ENCODE measurements at regions of chr11 and their contacts with region 1.

Region 1: DNA sequence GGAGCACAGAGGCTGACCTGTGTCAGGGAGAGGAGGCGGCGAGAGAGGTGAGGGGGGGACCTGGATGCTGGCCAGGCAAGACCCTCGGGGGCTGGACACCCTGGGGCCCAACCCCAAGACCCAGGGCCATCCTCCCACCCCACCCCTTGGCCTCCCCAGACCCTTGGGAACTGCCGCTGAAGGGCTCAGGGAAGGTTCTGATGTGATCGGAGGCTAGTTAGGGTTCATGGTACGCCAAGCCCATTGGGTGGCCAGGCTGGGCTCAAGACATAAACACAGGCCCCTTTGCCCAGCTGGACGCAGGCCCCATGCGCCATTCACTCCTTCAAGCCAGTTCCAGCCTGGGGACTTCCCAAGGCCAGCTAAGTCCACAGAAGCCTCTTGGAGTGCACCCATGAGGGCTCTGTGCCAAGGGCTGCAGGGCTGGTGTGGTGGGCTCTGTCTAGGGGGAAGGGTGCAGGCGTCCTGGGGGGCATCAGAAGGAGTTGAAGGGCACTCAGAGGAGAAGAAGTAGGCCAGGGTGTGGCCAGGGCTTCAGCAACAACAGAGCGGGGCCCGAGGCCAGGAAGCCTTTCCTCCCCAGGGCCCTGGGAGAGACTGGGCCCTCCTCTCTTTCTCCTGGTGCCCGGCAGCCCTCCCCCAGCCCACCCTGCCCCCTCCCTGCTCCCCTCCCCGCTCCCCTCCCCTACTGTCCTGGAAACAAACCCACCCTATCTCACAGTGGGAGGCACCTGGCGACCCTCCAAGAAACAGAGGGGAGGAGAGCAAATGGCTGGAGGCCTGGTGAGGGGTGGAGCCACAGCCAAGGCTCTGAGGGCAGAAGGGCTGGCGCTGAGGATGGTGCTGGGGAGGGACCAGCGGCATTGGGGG is 12.9 kb downstream of the TSPAN32 start:
- DNase-seq: peak; percentile 91
- H3K4me3 ChIP-seq: peak overlapping the region; percentile 51
- H3K27ac ChIP-seq: peak overlapping the region; percentile 83
- H3K4me1 ChIP-seq: peaks cover 40% of the 10 kb centered on the region
- H3K27me3 ChIP-seq: no peaks in the 10 kb centered on the region
- CTCF ChIP-seq: no peak

Region 2: GRCh38 chr11:2377511-2378443 is 63.0 kb after region 1 on chr11:
- intact Hi-C with region 1: loop called (anchors 10 kb)
- DNase-seq: peak; percentile 75
- H3K4me3 ChIP-seq: peak overlapping the region; percentile 100
- H3K27ac ChIP-seq: peak overlapping the region; percentile 99
- H3K4me1 ChIP-seq: peaks cover 75% of the 10 kb centered on the region
- H3K27me3 ChIP-seq: no peaks in the 10 kb centered on the region
- CTCF ChIP-seq: no peak